ENCODE measurements at regions of chr1 and their contacts with region 1.

Region 1: GRCh38 chr1:92317836-92318493 is 19.1 kb downstream of the RPAP2 start:
- DNase-seq: peak; percentile 76
- H3K4me3 Mint-ChIP-seq: peak overlapping the region; percentile 61
- H3K27ac Mint-ChIP-seq: peak overlapping the region; percentile 76
- H3K4me1 Mint-ChIP-seq: peaks cover 54% of the 10 kb centered on the region
- H3K27me3 Mint-ChIP-seq: no peaks in the 10 kb centered on the region

Region 2: GRCh38 chr1:92329347-92330129 is 11.6 kb after region 1 on chr1:
- intact Hi-C with region 1: loop called (anchors 1 kb)
- DNase-seq: no peak
- H3K4me3 Mint-ChIP-seq: no peak overlapping the region
- H3K27ac Mint-ChIP-seq: no peak overlapping the region
- H3K4me1 Mint-ChIP-seq: peaks cover 29% of the 10 kb centered on the region
- H3K27me3 Mint-ChIP-seq: no peaks in the 10 kb centered on the region

Region 3: GRCh38 chr1:92411511-92411910 is 93.5 kb after region 1 on chr1:
- intact Hi-C with region 1: loop called (anchors 5 kb)
- DNase-seq: no peak
- H3K4me3 Mint-ChIP-seq: peak overlapping the region; percentile 29
- H3K27ac Mint-ChIP-seq: peak overlapping the region; percentile 58
- H3K4me1 Mint-ChIP-seq: peaks cover 39% of the 10 kb centered on the region
- H3K27me3 Mint-ChIP-seq: no peaks in the 10 kb centered on the region

Region 4: GRCh38 chr1:92485381-92486257 is 167.7 kb after region 1 on chr1:
- intact Hi-C with region 1: loop called (anchors 2 kb)
- DNase-seq: peak; percentile 96
- H3K4me3 Mint-ChIP-seq: peak overlapping the region; percentile 95
- H3K27ac Mint-ChIP-seq: peak overlapping the region; percentile 98
- H3K4me1 Mint-ChIP-seq: peaks cover 33% of the 10 kb centered on the region
- H3K27me3 Mint-ChIP-seq: no peaks in the 10 kb centered on the region

Measured in activated CD4-positive, alpha-beta T cell treated with anti-CD3 and anti-CD28 coated beads, Interleukin-2, amount 10 ng/mL, durations not matched to agents 24 days and 14 days (primary cell).